ENCODE measurements at regions of chr19 and their contacts with region 1.

Region 1: DNA sequence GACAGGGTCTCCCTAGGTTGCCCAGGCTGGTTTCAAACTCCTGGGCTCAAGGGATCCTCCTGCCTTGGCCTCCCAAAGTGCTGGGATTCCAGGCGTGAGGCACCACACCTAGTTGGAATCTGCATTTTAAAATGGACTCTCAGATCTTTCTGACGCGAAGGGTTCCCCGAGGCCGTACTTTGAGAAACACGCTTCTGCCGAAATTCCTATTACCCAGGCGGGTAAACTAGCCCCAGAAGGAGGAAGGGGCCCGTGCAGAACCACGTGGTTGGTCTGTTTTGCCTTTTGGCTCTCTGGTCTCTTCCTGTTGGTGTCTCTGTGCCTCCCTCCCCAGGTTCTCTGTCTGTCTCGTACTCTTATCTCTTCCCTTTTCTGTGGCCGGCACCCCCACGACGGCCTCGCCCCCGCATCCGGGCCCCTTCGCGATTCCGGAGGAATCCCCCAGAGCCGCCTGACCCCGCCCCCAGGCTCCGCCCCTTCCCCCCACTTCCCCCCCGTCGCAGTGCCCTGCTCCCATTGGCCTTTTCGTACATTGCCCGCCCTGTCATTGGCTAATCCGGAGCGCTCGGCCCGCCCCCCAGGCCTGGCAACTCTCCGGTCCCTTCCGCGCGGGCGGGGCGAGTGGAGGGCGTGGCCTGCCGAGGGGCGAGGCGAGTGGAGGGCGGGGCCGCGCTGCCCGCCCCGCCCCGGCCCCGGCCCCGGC is at the start of gene TNFAIP8L1:
- H3K4me3 ChIP-seq: peak within 1 kb of the TSS; percentile 36
- H3K27ac ChIP-seq: peak within 1 kb of the TSS; percentile 51; the same call in 1 of the 2 replicates
- H3K4me1 ChIP-seq: no peaks in the 10 kb centered on the region; the same call in 1 of the 2 replicates
- CTCF ChIP-seq: no peak

Region 2: DNA sequence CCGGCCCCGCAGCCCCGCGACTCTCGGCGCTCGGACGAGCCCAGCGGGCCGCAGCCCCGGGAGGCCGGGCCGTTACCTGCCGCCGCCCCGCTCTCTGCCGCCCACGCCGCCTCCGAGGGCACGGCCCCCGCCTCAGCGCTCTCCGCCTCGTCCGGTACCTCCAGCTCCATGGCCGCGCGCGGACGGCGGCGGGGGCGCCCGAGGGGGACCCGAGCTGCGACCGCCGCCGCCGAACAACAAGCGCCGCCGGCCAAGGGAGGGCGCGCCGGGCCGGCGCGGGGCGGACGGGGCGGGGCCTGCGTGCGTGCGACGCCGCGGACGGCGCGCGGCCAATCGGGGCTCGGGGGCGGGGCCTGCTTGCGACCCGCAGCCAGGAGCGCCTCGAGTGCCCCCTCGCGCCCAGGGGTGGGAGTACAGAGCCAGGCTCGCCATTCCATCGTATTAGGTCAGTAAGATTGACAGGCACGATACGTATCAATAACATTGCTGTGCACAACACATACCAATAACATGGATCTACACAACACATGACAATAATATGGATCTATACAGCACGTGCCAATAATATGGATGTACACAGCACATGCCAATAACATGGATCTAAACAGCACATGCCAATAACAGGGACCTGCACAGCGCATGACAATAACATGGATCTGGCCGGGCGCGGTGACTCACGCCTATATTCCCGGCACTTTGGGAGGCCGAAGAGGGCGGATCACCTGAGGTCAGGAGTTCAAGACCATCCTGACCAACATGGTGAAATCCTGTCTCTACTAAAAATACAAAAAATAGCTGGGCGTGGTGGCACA is 938.6 kb before region 1 on chr19 and contains the start of gene PIP5K1C:
- CTCF ChIA-PET with region 1: no interaction called
- POLR2A ChIA-PET with region 1: no interaction called
- H3K4me3 ChIP-seq: peak within 1 kb of the TSS; percentile 69
- H3K27ac ChIP-seq: peak within 1 kb of the TSS; percentile 31; the same call in 1 of the 2 replicates
- H3K4me1 ChIP-seq: no peaks in the 10 kb centered on the region
- CTCF ChIP-seq: peak; percentile 74; the same call in 1 of the 2 replicates

Region 3: GRCh38 chr19:4511195-4512019 is 127.6 kb before region 1 on chr19:
- CTCF ChIA-PET with region 1: no interaction called
- POLR2A ChIA-PET with region 1: no interaction called
- H3K4me3 ChIP-seq: no peak overlapping the region
- H3K27ac ChIP-seq: no peak overlapping the region
- H3K4me1 ChIP-seq: no peaks in the 10 kb centered on the region
- CTCF ChIP-seq: no peak

Region 4: DNA sequence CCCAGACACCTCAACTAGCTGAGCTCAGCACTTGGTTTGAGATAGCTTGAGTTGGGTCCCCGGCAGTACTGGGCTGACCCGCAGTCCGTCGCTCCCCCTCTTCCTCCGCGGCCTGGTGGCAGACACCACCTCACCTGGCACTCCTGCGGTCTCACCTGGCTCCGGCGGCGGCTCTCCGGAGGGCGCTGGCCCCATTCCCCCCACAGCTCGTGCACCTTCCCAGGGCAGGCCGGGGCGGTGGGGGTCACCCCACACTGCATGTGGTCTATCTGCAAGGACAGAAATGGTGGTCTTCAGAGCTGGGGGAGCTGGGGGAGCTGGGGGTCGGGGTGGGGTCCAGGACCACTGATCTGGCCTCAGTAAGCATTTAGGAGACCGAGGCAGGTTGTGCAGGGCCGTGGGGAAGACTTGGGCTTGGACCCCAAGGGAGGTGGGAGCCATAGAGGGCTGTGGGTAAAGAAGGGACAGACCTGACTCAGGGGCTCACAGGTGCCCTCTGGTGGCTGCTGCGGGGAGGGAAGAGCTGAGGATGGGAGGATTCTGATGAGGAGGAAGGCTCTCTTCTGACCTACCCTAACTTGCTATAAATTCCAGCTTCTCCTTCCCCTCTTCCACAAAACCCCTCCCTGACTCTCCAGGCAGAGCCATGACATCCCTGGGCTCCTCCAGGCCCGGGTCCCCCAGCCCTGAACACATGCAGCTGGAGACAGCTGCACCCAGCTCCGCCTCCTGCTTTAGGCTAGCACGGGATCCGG is 114.0 kb before region 1 on chr19:
- CTCF ChIA-PET with region 1: interaction called, 41 read pairs
- POLR2A ChIA-PET with region 1: no interaction called
- H3K4me3 ChIP-seq: no peak overlapping the region
- H3K27ac ChIP-seq: no peak overlapping the region
- H3K4me1 ChIP-seq: no peaks in the 10 kb centered on the region
- CTCF ChIP-seq: peak; percentile 74

Region 5: GRCh38 chr19:4557971-4558941 is 80.7 kb before region 1 on chr19:
- CTCF ChIA-PET with region 1: interaction called, 15 read pairs
- POLR2A ChIA-PET with region 1: no interaction called
- H3K4me3 ChIP-seq: no peak overlapping the region
- H3K27ac ChIP-seq: no peak overlapping the region
- H3K4me1 ChIP-seq: no peaks in the 10 kb centered on the region
- CTCF ChIP-seq: peak; percentile 68

Region 6: DNA sequence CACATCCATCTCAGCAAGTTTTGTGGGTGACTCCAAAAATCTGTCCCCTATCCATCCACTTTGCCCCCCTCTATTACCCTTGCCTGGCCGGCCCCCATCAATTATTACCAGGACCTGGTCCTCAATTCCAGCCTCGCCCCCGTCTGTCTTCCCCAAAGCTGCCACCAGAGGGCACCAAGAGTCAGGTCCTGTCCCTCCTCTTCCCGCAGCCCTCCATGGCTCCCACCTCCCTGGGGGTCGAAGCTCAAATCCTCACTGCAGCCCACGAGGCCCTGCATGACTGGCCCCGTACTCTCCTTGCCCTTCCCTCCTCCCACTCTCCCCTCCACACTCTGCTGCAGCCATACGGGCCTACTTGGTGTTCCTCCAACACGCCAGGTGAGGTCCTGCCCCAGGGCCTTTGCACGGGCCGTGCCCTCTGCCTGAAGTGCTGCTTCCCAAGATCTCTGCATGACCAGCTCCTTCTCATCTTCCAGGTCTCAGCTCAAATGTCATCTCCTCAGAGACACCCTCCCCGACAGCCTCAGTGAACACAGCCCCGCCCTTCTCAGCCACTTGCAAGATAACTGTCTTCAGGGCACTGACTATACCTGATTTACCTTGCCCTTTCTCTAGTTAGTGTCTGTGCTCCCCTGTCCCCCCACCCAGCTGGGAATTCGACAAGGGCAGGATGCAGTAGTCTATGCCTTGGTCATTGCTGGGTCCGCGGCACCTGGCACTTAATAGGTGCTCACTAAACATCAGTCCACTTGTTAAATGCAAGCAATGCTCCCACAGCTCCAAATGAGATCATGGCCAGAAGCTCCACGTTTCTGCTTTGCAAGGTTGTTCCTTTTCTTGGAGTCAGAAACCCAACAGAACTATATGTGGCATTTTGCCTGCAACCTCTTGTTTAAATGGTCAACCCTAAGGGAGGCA is 62.7 kb before region 1 on chr19:
- CTCF ChIA-PET with region 1: interaction called, 46 read pairs
- POLR2A ChIA-PET with region 1: interaction called, 4 read pairs
- H3K4me3 ChIP-seq: no peak overlapping the region
- H3K27ac ChIP-seq: no peak overlapping the region
- H3K4me1 ChIP-seq: peaks cover 4% of the 10 kb centered on the region
- CTCF ChIP-seq: peak; percentile 90

Region 7: DNA sequence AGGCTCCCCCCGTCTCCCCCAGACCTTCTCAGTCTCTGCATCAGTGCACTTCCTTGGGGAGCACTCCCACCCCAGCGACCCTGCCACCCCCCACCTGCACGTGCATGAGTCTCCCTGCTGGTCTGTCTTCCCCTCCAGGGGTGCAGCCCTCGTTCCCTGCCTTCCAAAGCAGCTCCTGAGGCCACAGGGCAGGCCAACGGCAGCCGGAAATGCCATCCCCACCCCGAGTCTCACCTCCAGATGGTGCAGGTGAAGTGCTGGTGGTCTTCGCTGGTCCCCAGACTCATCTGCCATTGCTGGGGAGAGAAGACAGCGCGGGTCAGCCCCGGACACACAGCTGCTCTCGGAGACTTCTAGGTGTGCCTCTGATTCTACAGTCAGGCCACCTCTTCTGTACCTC is 25.7 kb after region 1 on chr19:
- CTCF ChIA-PET with region 1: interaction called, 5 read pairs
- POLR2A ChIA-PET with region 1: interaction called, 11 read pairs
- H3K4me3 ChIP-seq: no peak overlapping the region
- H3K27ac ChIP-seq: no peak overlapping the region
- H3K4me1 ChIP-seq: no peaks in the 10 kb centered on the region
- CTCF ChIP-seq: no peak